ENCODE measurements at regions of chr6 and their contacts with region 1.

Region 1: DNA sequence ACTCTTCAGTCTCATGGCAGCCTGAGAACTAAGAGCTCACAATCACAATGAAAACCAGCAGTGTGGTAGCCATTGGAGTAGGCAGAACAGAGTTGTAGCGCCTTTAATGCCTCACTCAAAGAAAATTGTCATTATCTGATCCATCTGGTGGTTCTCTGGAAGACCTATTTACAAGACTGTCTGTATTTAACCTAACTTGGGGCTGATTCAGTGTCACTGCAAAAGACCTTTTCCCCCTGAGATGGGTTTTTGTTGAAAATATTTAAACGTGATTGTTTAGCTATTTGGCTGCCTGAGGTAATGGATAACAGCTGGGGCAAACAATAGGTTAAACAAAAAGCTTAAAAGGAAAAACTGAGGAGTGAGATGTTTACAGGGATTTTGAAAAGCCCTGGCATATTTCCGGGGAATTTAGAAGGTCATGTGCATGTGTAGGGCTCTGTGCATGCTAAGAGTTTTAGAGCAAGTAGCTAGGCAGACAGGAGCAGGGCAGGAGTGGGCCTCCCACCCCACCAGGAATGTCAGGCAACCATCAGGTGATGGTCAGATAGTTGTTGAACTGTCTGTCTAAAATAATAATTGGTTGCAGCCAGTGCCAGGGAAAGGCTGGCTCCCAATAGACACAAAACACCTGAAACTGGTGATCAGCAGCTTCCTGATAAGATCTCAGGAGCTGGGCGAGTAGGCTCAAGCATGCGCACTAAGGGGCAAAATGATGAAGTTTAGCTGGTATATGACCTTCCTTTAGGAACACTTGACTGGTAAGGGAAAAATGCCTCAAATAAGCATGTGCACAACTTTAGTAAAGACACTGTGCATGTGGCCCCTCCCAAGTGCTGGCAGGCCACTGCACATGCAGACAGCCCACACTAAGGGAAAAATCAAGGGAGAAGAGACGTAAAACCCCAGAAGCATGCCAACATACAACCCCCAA is 70.8 kb upstream of the AKIRIN2 start:
- DNase-seq: no peak
- ATAC-seq: no peak
- H3K4me3 ChIP-seq: no peak overlapping the region
- H3K27ac ChIP-seq: no peak overlapping the region
- H3K4me1 ChIP-seq: no peaks in the 10 kb centered on the region
- H3K27me3 ChIP-seq: no peaks in the 10 kb centered on the region
- CTCF ChIP-seq: no peak
- EP300 ChIP-seq: no peak
- POLR2A ChIP-seq: no peak
- RAD21 ChIP-seq: no peak

Region 2: GRCh38 chr6:87784690-87785089 is 11.8 kb after region 1 on chr6:
- CTCF ChIA-PET with region 1: interaction called, 4 read pairs
- POLR2A ChIA-PET with region 1: interaction called, 6 read pairs
- RAD21 ChIA-PET with region 1: no interaction called
- SMC1A ChIA-PET with region 1: interaction called, 16 read pairs
- in situ Hi-C with region 1: no loop called
- intact Hi-C with region 1: no loop called
- DNase-seq: no peak
- ATAC-seq: no peak
- H3K4me3 ChIP-seq: no peak overlapping the region
- H3K27ac ChIP-seq: no peak overlapping the region
- H3K4me1 ChIP-seq: no peaks in the 10 kb centered on the region
- H3K27me3 ChIP-seq: no peaks in the 10 kb centered on the region
- CTCF ChIP-seq: no peak
- EP300 ChIP-seq: no peak
- POLR2A ChIP-seq: no peak
- RAD21 ChIP-seq: no peak

Measured in GM12878 (cell line).